Activated CD4-positive, alpha-beta memory T cell treated with anti-CD3 and anti-CD28 coated beads for 36 hours (primary cell): ENCODE measurements at regions of chr4 and their contacts with region 1.

Region 1: GRCh38 chr4:15655229-15656037 is at the start of gene FBXL5:
- DNase-seq: peak; percentile 89
- H3K4me3 Mint-ChIP-seq: peak within 1 kb of the TSS; percentile 93
- H3K27ac Mint-ChIP-seq: peak within 1 kb of the TSS; percentile 94
- H3K4me1 Mint-ChIP-seq: peaks cover 61% of the 10 kb centered on the region
- H3K27me3 Mint-ChIP-seq: no peaks in the 10 kb centered on the region
- total RNA-seq, gene FBXL5: 26.5 to 30.4 TPM

Region 2: DNA sequence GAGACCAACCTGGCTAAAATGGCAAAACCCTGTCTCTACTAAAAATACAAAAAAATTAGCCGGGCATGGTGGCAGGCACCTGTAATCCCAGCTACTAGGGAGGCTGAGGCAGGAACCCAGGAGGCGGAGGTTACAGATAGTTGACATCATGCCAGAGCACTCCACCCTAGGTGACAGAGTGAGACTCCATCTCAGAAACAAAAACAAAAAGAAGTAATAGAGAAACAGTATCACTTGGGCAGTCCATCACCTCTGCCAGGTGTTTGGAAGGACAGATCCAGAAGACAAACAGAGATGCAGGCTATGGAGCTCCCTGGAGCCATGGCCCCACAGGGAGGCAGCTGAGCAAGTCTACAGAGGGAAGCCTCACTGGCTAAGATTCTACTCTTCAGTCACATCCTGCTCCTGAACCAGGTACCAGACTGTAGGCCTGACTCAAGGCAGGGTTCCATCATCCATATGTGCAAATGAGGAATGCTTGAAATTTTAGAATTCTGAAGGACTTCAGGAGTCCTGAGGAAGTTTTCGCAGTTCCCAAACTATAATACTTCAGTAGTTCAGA is 734.6 kb before region 1 on chr4:
- CTCF ChIA-PET with region 1: no interaction called
- POLR2A ChIA-PET with region 1: no interaction called
- intact Hi-C with region 1: loop called (anchors 5 kb)
- DNase-seq: peak; percentile 44
- H3K4me3 Mint-ChIP-seq: no peak overlapping the region
- H3K27ac Mint-ChIP-seq: no peak overlapping the region
- H3K4me1 Mint-ChIP-seq: no peaks in the 10 kb centered on the region
- H3K27me3 Mint-ChIP-seq: peaks cover 6% of the 10 kb centered on the region

Region 3: GRCh38 chr4:15420642-15421041 is 234.8 kb before region 1 on chr4:
- CTCF ChIA-PET with region 1: no interaction called
- POLR2A ChIA-PET with region 1: interaction called, 3 read pairs
- intact Hi-C with region 1: loop called (anchors 5 kb)
- DNase-seq: no peak
- H3K4me3 Mint-ChIP-seq: no peak overlapping the region
- H3K27ac Mint-ChIP-seq: no peak overlapping the region
- H3K4me1 Mint-ChIP-seq: peaks cover 27% of the 10 kb centered on the region
- H3K27me3 Mint-ChIP-seq: peaks cover 1% of the 10 kb centered on the region

Region 4: GRCh38 chr4:15681207-15682015 is 26.0 kb after region 1 on chr4 and contains the start of gene FAM200B:
- CTCF ChIA-PET with region 1: interaction called, 7 read pairs
- POLR2A ChIA-PET with region 1: interaction called, 12 read pairs
- intact Hi-C with region 1: loop called (anchors 1 kb)
- DNase-seq: peak; percentile 99
- H3K4me3 Mint-ChIP-seq: peak within 1 kb of the TSS; percentile 99
- H3K27ac Mint-ChIP-seq: peak within 1 kb of the TSS; percentile 95
- H3K4me1 Mint-ChIP-seq: peaks cover 29% of the 10 kb centered on the region
- H3K27me3 Mint-ChIP-seq: no peaks in the 10 kb centered on the region
- total RNA-seq, gene FAM200B: 8.3 to 8.9 TPM

Region 5: GRCh38 chr4:16225863-16226815 is 570.7 kb after region 1 on chr4 and contains the start of gene TAPT1:
- CTCF ChIA-PET with region 1: no interaction called
- POLR2A ChIA-PET with region 1: no interaction called
- intact Hi-C with region 1: loop called (anchors 10 kb)
- DNase-seq: peak; percentile 87
- H3K4me3 Mint-ChIP-seq: peak within 1 kb of the TSS; percentile 94
- H3K27ac Mint-ChIP-seq: peak within 1 kb of the TSS; percentile 96
- H3K4me1 Mint-ChIP-seq: peaks cover 60% of the 10 kb centered on the region
- H3K27me3 Mint-ChIP-seq: no peaks in the 10 kb centered on the region
- total RNA-seq, gene TAPT1: 35.6 TPM